ENCODE measurements at regions of chr1 and their contacts with region 1.

Region 1: GRCh38 chr1:58155418-58156123 is 391.0 kb downstream of the OMA1 start:
- DNase-seq: peak; percentile 63
- ATAC-seq: peak; percentile 89

Region 2: DNA sequence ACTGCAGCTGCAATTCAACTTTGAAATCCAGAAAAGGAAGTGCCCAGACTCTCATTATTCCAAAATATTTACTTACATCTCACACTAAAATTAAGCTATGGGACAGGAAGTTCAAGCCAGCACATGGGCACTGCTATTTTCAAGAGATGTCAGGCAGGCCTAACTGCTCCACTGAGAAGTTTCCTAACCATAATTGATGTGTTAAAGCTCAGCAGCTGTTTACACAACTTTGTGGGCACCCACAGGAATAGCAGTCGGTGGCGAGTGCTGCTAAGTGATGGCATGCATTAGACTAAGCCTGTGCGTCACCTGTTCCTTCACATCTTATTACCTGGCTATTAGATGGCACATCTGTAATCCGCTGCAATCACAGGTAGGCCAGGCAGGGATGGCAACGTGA is 428.4 kb before region 1 on chr1:
- intact Hi-C with region 1: loop called (anchors 10 kb)
- DNase-seq: no peak
- ATAC-seq: no peak

Region 3: DNA sequence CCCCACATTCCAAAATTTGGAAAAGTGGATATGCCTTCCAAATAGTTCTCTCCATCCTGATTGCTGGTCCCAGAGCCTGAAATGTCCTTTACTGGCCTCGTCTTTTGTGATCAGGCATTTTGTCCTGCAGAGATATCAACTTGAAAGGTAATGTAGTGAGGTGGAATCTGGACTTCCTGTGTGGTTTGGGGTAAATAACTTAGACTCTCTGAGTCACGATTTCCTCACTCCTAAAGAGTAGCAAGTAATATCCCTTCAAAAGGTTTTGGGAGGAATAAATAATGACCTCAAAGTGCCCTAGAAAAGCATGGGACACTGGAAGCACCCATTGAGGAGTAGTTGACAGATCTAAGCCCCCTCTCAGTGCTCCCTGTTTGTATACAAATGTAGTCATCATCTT is 35.6 kb before region 1 on chr1:
- intact Hi-C with region 1: no loop called
- DNase-seq: no peak
- ATAC-seq: no peak